CD8-positive, alpha-beta memory T cell (primary cell): ENCODE measurements at regions of chr11 and their contacts with region 1.

Region 1: DNA sequence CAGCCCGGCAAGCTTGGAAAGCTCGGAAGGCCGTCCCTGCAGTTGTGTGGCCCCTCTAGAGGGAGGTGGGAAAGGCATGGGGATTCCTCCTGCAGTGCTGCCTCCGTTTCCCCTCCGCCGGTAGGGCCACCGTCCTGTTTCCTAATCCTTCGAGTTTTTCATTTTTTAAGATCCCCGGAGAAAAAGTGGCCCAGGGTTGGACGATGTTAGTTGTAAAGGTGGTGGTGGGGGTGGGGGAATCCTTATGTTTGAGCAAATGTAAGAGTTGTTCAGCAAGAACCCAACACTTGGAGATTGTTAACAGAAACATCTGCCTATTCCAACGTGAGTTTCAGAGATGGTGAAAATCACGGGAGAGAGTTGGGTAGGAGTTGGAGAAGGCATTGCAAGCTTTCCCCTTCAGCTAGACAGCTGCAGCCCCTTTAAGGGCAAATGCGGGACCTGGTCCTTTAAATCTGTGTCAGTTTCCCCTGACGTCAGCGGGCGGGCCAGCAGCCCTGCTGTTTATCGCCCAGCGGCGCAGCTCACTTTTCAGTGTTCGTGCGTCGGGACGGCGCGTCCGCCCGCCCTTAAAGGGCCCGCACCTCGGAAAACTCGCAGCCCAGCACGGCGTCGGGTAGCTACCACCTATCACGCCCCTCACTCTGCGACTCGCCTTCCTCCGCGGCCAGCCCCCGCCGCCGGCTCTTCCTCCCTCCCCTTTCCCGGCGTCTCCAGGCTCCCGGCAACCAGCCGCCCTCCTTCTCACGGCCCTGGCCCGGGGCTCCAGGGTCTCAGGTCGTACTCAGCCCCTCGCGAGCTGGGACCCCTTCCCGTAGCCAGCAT is at the start of gene SIDT2:
- DNase-seq: peak; percentile 83 to 92 (median 84)
- H3K4me3 ChIP-seq: peak within 1 kb of the TSS; percentile 81
- H3K4me3 Mint-ChIP-seq: peak within 1 kb of the TSS; percentile 94 to 100 (median 95)
- H3K27ac ChIP-seq: peak within 1 kb of the TSS; percentile 76
- H3K27ac Mint-ChIP-seq: peak within 1 kb of the TSS; percentile 93 to 99 (median 96)
- H3K4me1 ChIP-seq: peaks cover 29% of the 10 kb centered on the region
- H3K4me1 Mint-ChIP-seq: peaks cover 29 to 36% (median 36%) of the 10 kb centered on the region in 3 donors
- H3K27me3 ChIP-seq: no peaks in the 10 kb centered on the region
- H3K27me3 Mint-ChIP-seq: no peaks in the 10 kb centered on the region
- total RNA-seq, gene SIDT2: 13.8 to 14.9 TPM

Region 2: GRCh38 chr11:117143871-117144476 is 34.4 kb before region 1 on chr11 and contains the start of gene PAFAH1B2:
- CTCF ChIA-PET with region 1: interaction called, 3 read pairs
- POLR2A ChIA-PET with region 1: interaction called, 15 read pairs
- DNase-seq: peak; percentile 90 to 96 (median 93)
- H3K4me3 ChIP-seq: peak within 1 kb of the TSS; percentile 98
- H3K4me3 Mint-ChIP-seq: peak within 1 kb of the TSS; percentile 91 to 99 (median 96)
- H3K27ac ChIP-seq: peak within 1 kb of the TSS; percentile 80
- H3K27ac Mint-ChIP-seq: peak within 1 kb of the TSS; percentile 93 to 99 (median 98)
- H3K4me1 ChIP-seq: peaks cover 31% of the 10 kb centered on the region
- H3K4me1 Mint-ChIP-seq: peaks cover 38 to 53% (median 52%) of the 10 kb centered on the region in 3 donors
- H3K27me3 ChIP-seq: no peaks in the 10 kb centered on the region
- H3K27me3 Mint-ChIP-seq: peaks cover 9 to 15% of the 10 kb centered on the region in 2 donors
- total RNA-seq, gene PAFAH1B2: 79.5 to 84.5 TPM

Region 3: GRCh38 chr11:117226388-117227385 is 48.3 kb after region 1 on chr11:
- CTCF ChIA-PET with region 1: interaction called, 33 read pairs
- POLR2A ChIA-PET with region 1: interaction called, 21 read pairs
- DNase-seq: peak; percentile 22 to 65 (median 62)
- H3K4me3 ChIP-seq: no peak overlapping the region
- H3K4me3 Mint-ChIP-seq: peak overlapping the region in 5 of 7 donors; percentile 36 to 53 (median 50)
- H3K27ac ChIP-seq: no peak overlapping the region
- H3K27ac Mint-ChIP-seq: peak overlapping the region; percentile 35 to 90 (median 78)
- H3K4me1 ChIP-seq: peaks cover 33% of the 10 kb centered on the region
- H3K4me1 Mint-ChIP-seq: peaks cover 39 to 55% (median 46%) of the 10 kb centered on the region in 3 donors
- H3K27me3 ChIP-seq: no peaks in the 10 kb centered on the region
- H3K27me3 Mint-ChIP-seq: no peaks in the 10 kb centered on the region

Region 4: GRCh38 chr11:117232092-117232878 is 53.9 kb after region 1 on chr11 and contains the start of gene RNF214:
- CTCF ChIA-PET with region 1: interaction called, 33 read pairs
- POLR2A ChIA-PET with region 1: interaction called, 21 read pairs
- DNase-seq: peak; percentile 66 to 81 (median 74)
- H3K4me3 ChIP-seq: peak within 1 kb of the TSS; percentile 91
- H3K4me3 Mint-ChIP-seq: peak within 1 kb of the TSS; percentile 93 to 100 (median 100)
- H3K27ac ChIP-seq: peak within 1 kb of the TSS; percentile 92
- H3K27ac Mint-ChIP-seq: peak within 1 kb of the TSS; percentile 92 to 100 (median 99)
- H3K4me1 ChIP-seq: peaks cover 32% of the 10 kb centered on the region
- H3K4me1 Mint-ChIP-seq: peaks cover 46 to 61% (median 53%) of the 10 kb centered on the region in 3 donors
- H3K27me3 ChIP-seq: no peaks in the 10 kb centered on the region
- H3K27me3 Mint-ChIP-seq: no peaks in the 10 kb centered on the region
- total RNA-seq, gene RNF214: 25.1 to 25.3 TPM